ENCODE measurements at regions of chr9 and their contacts with region 1.

Region 1: GRCh38 chr9:37036776-37037502 is 2.9 kb upstream of the PAX5 start:
- DNase-seq: peak in 8 of 9 donors; percentile 31 to 55 (median 47)
- ATAC-seq: peak; percentile 74
- H3K4me3 ChIP-seq: peak overlapping the region; percentile 49
- H3K4me3 Mint-ChIP-seq: peak overlapping the region; percentile 76 to 98 (median 88)
- H3K27ac ChIP-seq: no peak overlapping the region
- H3K27ac Mint-ChIP-seq: peak overlapping the region in 5 of 9 donors; percentile 6 to 75 (median 30)
- H3K4me1 ChIP-seq: peaks cover 16 to 34% of the 10 kb centered on the region in 2 donors
- H3K4me1 Mint-ChIP-seq: peaks cover 21 to 50% (median 36%) of the 10 kb centered on the region in 7 donors
- H3K27me3 ChIP-seq: peaks cover 25 to 62% of the 10 kb centered on the region in 2 donors
- H3K27me3 Mint-ChIP-seq: peaks cover 78 to 94% (median 84%) of the 10 kb centered on the region in 5 donors

Region 2: GRCh38 chr9:36382484-36382883 is 654.5 kb before region 1 on chr9:
- CTCF ChIA-PET with region 1: no interaction called
- POLR2A ChIA-PET with region 1: no interaction called
- intact Hi-C with region 1: no loop called
- DNase-seq: no peak
- ATAC-seq: no peak
- H3K4me3 ChIP-seq: no peak overlapping the region
- H3K4me3 Mint-ChIP-seq: peak overlapping the region in 5 of 10 donors; percentile 16 to 35 (median 23)
- H3K27ac ChIP-seq: no peak overlapping the region
- H3K27ac Mint-ChIP-seq: peak overlapping the region in 7 of 9 donors; percentile 1 to 77 (median 26)
- H3K4me1 ChIP-seq: peaks cover 10 to 33% of the 10 kb centered on the region in 2 donors
- H3K4me1 Mint-ChIP-seq: peaks cover 38 to 82% (median 72%) of the 10 kb centered on the region in 7 donors
- H3K27me3 ChIP-seq: no peaks in the 10 kb centered on the region
- H3K27me3 Mint-ChIP-seq: no peaks in the 10 kb centered on the region

Region 3: GRCh38 chr9:37011530-37011929 is 25.4 kb before region 1 on chr9:
- CTCF ChIA-PET with region 1: no interaction called
- POLR2A ChIA-PET with region 1: no interaction called
- intact Hi-C with region 1: no loop called
- DNase-seq: no peak
- ATAC-seq: no peak
- H3K4me3 ChIP-seq: no peak overlapping the region
- H3K4me3 Mint-ChIP-seq: no peak overlapping the region
- H3K27ac ChIP-seq: no peak overlapping the region
- H3K27ac Mint-ChIP-seq: no peak overlapping the region
- H3K4me1 ChIP-seq: no peaks in the 10 kb centered on the region
- H3K4me1 Mint-ChIP-seq: peaks cover 0 to 2% (median 0%) of the 10 kb centered on the region in 7 donors
- H3K27me3 ChIP-seq: no peaks in the 10 kb centered on the region
- H3K27me3 Mint-ChIP-seq: peaks cover 40 to 63% (median 56%) of the 10 kb centered on the region in 5 donors

Region 4: DNA sequence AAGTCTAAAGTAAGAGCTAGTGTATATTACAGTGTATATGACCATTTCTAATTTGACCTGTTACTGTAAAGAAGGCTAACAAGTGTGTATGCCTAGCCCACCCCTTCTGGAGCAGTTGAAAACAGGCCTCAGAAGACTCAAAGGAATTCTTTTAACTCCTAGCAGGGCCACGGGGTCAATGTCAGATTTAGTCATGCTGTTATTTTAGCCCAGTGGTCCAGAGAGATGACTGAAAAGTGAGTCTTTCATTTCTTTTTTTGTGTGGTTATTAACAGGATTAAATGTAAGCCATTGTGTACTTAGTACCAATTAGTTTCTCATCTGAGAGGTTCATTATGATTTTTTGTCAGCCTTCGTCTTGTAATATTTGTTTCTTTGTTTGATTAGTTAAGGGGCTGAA is 107.8 kb after region 1 on chr9:
- CTCF ChIA-PET with region 1: no interaction called
- POLR2A ChIA-PET with region 1: interaction called, 4 read pairs
- intact Hi-C with region 1: loop called in 1 of 2 experiments (anchors 5 kb)
- DNase-seq: no peak
- ATAC-seq: no peak
- H3K4me3 ChIP-seq: no peak overlapping the region
- H3K4me3 Mint-ChIP-seq: peak overlapping the region in 9 of 10 donors; percentile 8 to 77 (median 50)
- H3K27ac ChIP-seq: no peak overlapping the region
- H3K27ac Mint-ChIP-seq: peak overlapping the region in 8 of 9 donors; percentile 23 to 91 (median 83)
- H3K4me1 ChIP-seq: peaks cover 19 to 47% of the 10 kb centered on the region in 2 donors
- H3K4me1 Mint-ChIP-seq: peaks cover 21 to 89% (median 71%) of the 10 kb centered on the region in 7 donors
- H3K27me3 ChIP-seq: no peaks in the 10 kb centered on the region
- H3K27me3 Mint-ChIP-seq: no peaks in the 10 kb centered on the region

Region 5: DNA sequence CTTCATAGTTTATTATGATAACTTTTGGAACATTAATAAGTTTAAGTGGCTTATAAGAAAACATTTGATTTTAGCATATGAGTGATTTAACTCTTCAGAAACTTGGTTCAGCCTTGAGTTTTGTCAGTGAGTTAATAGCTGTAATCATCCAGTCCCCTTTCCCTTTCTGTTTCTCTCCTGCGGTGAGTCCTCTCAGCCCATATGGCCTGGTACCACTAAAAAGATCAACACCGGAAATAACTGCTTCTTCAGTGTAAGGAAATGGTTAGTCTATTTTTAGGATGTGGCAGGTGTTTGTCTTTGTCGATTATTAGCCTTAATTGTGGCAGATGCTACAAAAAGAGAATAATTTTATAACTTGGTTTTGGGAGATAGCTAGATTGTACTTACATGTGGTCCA is 265.3 kb after region 1 on chr9:
- CTCF ChIA-PET with region 1: no interaction called
- POLR2A ChIA-PET with region 1: no interaction called
- intact Hi-C with region 1: loop called in 1 of 2 experiments (anchors 5 kb)
- DNase-seq: peak in 7 of 9 donors; percentile 26 to 64 (median 54)
- ATAC-seq: peak; percentile 88
- H3K4me3 ChIP-seq: no peak overlapping the region
- H3K4me3 Mint-ChIP-seq: peak overlapping the region; percentile 64 to 78 (median 74)
- H3K27ac ChIP-seq: no peak overlapping the region
- H3K27ac Mint-ChIP-seq: peak overlapping the region; percentile 34 to 89 (median 71)
- H3K4me1 ChIP-seq: peaks cover 25 to 37% of the 10 kb centered on the region in 2 donors
- H3K4me1 Mint-ChIP-seq: peaks cover 31 to 70% (median 58%) of the 10 kb centered on the region in 7 donors
- H3K27me3 ChIP-seq: no peaks in the 10 kb centered on the region
- H3K27me3 Mint-ChIP-seq: no peaks in the 10 kb centered on the region

Region 6: DNA sequence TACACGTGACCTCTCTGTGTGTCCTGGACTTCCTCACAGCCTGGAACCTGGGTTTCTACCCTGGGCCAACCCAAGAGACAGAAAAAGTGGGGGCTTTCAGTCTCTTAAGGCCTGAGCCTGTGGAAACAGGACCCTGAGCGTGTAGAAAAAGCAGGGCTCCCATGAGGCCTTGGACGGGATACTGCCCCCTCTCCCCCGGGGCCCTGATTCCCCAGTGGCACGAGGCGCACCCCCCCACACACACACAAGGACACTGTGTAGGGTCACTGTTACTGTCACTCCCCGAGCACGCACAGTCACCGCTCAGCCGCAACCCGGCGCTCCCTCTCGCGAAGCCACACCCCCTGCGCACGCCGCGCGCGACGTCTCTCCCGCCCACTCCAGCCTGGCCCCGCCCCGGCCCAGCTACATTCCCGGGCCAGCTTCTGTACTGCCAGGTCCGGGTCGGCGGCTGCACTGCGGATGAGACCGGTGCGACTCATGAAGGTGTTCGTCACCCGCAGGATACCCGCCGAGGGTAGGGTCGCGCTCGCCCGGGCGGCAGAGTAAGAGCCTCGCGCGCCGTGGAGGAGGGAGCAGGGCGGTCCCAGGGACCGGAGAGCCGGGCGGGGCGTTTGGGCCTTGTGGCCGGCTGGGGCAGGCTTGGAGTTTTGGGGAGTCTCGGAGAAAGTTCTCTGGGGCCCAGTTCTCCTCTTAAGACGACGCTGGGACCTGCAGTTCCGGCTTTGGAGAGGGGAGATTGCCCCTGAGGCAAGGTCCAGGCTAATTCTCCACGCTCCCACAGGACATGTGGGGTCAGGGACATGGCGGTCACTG is 385.6 kb after region 1 on chr9 and contains the start of gene GRHPR:
- CTCF ChIA-PET with region 1: no interaction called
- POLR2A ChIA-PET with region 1: no interaction called
- intact Hi-C with region 1: loop called in 1 of 2 experiments (anchors 5 kb)
- DNase-seq: peak; percentile 76 to 93 (median 84)
- ATAC-seq: peak; percentile 99
- H3K4me3 ChIP-seq: peak within 1 kb of the TSS; percentile 86
- H3K4me3 Mint-ChIP-seq: peak within 1 kb of the TSS; percentile 84 to 98 (median 96)
- H3K27ac ChIP-seq: peak within 1 kb of the TSS; percentile 89
- H3K27ac Mint-ChIP-seq: peak within 1 kb of the TSS; percentile 87 to 98 (median 95)
- H3K4me1 ChIP-seq: peaks cover 5 to 12% of the 10 kb centered on the region in 2 donors
- H3K4me1 Mint-ChIP-seq: peaks cover 19 to 31% (median 23%) of the 10 kb centered on the region in 7 donors
- H3K27me3 ChIP-seq: no peaks in the 10 kb centered on the region
- H3K27me3 Mint-ChIP-seq: no peaks in the 10 kb centered on the region
- total RNA-seq, gene GRHPR: 33.2 to 58.6 (median 53.1) TPM

Measured in naive thymus-derived CD4-positive, alpha-beta T cell (primary cell).